Heart right ventricle (tissue), 16 donors: ENCODE measurements at regions of chr21 and their contacts with region 1.

Region 1: DNA sequence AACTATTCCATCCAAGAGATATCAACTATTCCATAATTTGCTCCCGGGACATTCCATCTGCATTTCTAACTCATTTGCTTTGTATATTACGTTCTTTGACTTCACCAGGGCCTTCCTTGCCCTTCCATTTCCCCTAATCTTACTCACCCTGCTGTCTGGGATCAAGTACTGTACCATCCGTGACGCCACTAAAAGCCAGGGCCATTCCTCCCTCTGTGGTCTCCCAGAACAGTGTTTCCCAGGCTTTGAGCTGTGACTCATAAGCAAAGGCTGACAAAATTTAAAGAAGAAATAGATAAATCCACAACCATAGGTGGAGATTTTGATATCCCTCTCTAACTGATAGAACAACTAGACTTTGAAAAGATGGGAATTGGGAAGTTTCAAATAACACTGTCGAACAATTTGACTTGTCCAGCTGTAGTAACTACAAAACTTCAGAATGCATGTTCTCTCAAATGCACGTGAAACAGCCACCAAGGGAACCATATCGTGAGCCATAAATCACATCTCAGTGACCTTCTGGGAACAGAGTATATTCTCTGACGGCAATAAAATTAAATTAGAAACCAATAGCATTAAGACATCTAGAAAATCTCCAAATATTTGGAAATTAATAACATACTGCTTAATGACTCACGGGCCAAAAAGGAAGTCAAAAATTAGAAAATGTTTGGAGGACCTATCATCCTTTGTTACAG is 501.0 kb downstream of the SETD4 start:
- DNase-seq: no peak
- ATAC-seq: no peak
- H3K4me3 ChIP-seq: no peak overlapping the region
- H3K27ac ChIP-seq: peak overlapping the region in 1 of 10 donors; percentile 72
- H3K4me1 ChIP-seq: peaks cover 0 to 38% (median 0%) of the 10 kb centered on the region in 9 donors
- H3K27me3 ChIP-seq: peaks cover 0 to 19% (median 0%) of the 10 kb centered on the region in 7 donors
- CTCF ChIP-seq: no peak

Region 2: GRCh38 chr21:34881894-34882371 is 677.3 kb before region 1 on chr21:
- intact Hi-C with region 1: no loop called
- DNase-seq: no peak
- ATAC-seq: no peak
- H3K4me3 ChIP-seq: peak overlapping the region in 5 of 10 donors; percentile 3 to 73 (median 13)
- H3K27ac ChIP-seq: peak overlapping the region in 3 of 10 donors; percentile 11 to 99 (median 15)
- H3K4me1 ChIP-seq: peaks cover 0 to 46% (median 9%) of the 10 kb centered on the region in 9 donors
- H3K27me3 ChIP-seq: peaks cover 3 to 56% (median 52%) of the 10 kb centered on the region in 7 donors
- CTCF ChIP-seq: no peak

Region 3: GRCh38 chr21:35530766-35531165 is 28.5 kb before region 1 on chr21:
- intact Hi-C with region 1: no loop called
- DNase-seq: no peak
- ATAC-seq: no peak
- H3K4me3 ChIP-seq: no peak overlapping the region
- H3K27ac ChIP-seq: peak overlapping the region in 1 of 10 donors; percentile 88
- H3K4me1 ChIP-seq: peaks cover 0 to 34% (median 0%) of the 10 kb centered on the region in 9 donors
- H3K27me3 ChIP-seq: peaks cover 0 to 4% (median 0%) of the 10 kb centered on the region in 7 donors
- CTCF ChIP-seq: no peak

Region 4: DNA sequence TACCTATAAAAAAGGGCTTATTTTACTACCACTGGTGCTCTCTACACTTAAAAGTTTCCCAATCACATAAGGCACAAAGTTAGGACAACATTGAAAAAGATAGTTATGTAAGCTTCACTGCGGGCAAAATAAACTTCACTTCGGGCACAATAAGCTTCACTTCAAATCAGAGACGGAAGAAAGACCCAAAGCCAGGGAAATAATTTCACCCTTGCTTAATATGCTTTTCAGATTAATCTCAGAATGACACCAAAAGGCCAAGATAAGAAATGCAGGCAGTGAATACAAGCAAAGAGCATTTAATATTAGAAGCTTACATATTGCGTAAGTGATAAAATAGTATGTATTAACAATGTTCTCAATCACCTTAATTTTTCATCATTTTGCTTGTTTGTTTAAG is 56.8 kb after region 1 on chr21:
- intact Hi-C with region 1: loop called in 1 of 10 experiments (anchors 10 kb)
- DNase-seq: no peak
- ATAC-seq: no peak
- H3K4me3 ChIP-seq: no peak overlapping the region
- H3K27ac ChIP-seq: peak overlapping the region in 2 of 10 donors; percentile 40
- H3K4me1 ChIP-seq: peaks cover 0 to 15% (median 0%) of the 10 kb centered on the region in 9 donors
- H3K27me3 ChIP-seq: no peaks in the 10 kb centered on the region
- CTCF ChIP-seq: peak in 6 of 9 donors; percentile 35 to 55 (median 53)